ENCODE measurements at regions of chr10 and their contacts with region 1.

Region 1: GRCh38 chr10:60816628-60817397 is 38.5 kb downstream of the CDK1 start:
- DNase-seq: peak; percentile 26
- ATAC-seq: peak; percentile 85
- H3K4me3 ChIP-seq: no peak overlapping the region
- H3K27ac ChIP-seq: no peak overlapping the region
- H3K4me1 ChIP-seq: no peaks in the 10 kb centered on the region
- H3K27me3 ChIP-seq: no peaks in the 10 kb centered on the region
- CTCF ChIP-seq: peak; percentile 74 to 90 (median 80)
- EP300 ChIP-seq: no peak
- POLR2A ChIP-seq: no peak
- RAD21 ChIP-seq: peak; percentile 91

Region 2: DNA sequence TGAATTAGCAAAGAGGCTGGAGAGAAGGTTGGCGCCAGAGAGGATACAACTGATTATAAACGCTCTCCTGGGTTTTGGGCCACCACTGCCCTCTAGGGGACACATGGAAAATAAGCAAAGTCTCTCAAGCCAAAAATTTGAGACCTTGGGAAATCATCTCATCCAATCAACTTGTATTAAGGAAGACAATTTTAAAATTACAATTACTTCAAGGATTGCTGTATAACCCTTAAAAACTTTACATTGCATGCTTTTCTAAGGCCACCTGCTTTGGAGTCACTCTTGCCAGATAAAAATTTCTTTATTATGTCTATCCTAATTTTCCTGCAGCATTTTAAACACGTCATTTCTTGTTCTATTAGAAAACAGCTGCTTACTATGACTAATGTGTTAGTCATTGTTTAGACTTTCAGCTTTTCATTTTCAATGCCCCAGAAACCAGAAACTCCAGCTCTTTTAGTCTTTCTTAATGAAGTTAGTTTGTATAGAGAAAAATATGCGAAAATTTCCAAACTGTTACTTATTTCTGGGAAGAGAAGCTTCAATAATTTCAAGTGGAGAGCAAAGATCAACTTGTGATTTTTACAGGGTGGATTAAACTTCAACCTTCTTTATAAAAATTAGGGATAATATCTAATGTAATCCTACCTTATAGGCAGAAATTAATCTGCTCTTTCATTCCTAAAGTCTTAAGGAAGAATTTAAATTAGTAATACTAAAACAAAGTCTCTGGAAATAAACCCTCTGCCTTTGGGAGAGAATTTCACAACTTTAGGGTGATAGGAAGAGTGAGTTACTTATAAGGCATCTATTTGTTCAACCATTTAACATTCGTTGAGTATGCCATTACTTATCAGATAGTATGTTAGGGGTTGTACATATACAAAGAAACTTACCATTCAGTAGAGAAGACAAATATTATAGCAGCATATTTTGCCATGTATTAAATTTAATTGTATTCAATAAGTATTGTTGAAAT is 147.7 kb after region 1 on chr10:
- CTCF ChIA-PET with region 1: interaction called, 20 read pairs
- POLR2A ChIA-PET with region 1: no interaction called
- RAD21 ChIA-PET with region 1: interaction called, 6 read pairs
- SMC1A ChIA-PET with region 1: interaction called, 6 read pairs
- in situ Hi-C with region 1: loop called (anchors 5 kb)
- intact Hi-C with region 1: loop called (anchors 1 kb)
- DNase-seq: no peak
- ATAC-seq: peak; percentile 73
- H3K4me3 ChIP-seq: no peak overlapping the region
- H3K27ac ChIP-seq: no peak overlapping the region
- H3K4me1 ChIP-seq: no peaks in the 10 kb centered on the region
- H3K27me3 ChIP-seq: no peaks in the 10 kb centered on the region; a peak in 1 of 4 replicates
- CTCF ChIP-seq: peak; percentile 62 to 85 (median 73)
- EP300 ChIP-seq: no peak
- POLR2A ChIP-seq: no peak
- RAD21 ChIP-seq: peak; percentile 80

Region 3: DNA sequence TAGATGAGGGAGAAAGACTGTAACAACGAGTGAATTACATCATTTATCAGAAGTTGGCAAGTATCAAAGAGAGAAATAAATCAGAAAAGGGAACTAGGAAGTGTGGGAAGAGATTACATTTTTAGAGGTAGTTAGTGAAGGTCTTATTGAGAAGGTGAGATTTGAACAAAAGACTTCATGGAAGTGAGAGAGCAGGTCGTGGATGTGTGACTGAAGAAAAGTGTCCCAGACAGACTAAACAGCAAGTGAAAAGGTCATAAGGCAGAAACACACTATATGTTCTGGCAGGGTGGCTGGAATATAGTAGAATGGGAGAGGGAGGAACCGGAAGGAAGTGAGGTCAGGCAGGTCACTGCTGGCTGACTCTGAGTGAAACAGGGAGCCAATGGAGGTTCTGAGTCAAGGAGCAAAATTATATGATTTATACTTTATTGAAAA is 162.9 kb after region 1 on chr10:
- CTCF ChIA-PET with region 1: no interaction called
- POLR2A ChIA-PET with region 1: no interaction called
- RAD21 ChIA-PET with region 1: no interaction called
- SMC1A ChIA-PET with region 1: no interaction called
- in situ Hi-C with region 1: no loop called
- intact Hi-C with region 1: no loop called
- DNase-seq: no peak
- ATAC-seq: no peak
- H3K4me3 ChIP-seq: no peak overlapping the region
- H3K27ac ChIP-seq: no peak overlapping the region
- H3K4me1 ChIP-seq: no peaks in the 10 kb centered on the region
- H3K27me3 ChIP-seq: no peaks in the 10 kb centered on the region; a peak in 1 of 4 replicates
- CTCF ChIP-seq: no peak
- EP300 ChIP-seq: no peak
- POLR2A ChIP-seq: no peak
- RAD21 ChIP-seq: no peak

Region 4: DNA sequence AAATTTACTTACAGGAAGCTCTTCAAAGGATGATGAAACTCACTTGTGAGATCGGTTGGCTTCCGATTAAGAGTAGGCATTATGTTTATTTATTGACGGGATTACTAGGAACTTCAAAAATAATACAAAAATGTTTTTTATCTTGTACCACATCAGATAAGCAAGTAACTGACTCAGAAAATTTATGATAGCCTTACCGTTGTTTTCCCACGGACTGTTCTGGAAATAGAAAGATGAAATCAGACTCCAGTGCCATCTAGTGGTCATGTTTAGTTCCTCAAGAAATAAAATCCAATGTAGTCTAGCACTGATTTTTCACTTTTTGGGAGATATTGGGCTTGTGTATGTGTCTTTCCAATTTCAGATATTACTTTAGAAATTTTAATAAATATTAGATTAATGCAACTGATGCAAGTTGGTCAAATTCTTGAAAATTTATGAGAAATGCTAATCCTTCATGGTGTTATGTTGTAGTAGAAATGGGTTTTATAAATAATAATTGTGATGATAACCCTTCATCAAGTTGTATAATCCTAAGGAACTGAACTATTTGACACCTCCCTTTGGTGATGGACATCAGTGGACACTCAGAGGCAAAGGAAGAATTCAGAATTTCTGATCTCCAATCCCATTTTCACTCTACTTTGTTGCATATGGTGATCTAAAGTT is 467.5 kb after region 1 on chr10:
- CTCF ChIA-PET with region 1: interaction called, 8 read pairs
- POLR2A ChIA-PET with region 1: no interaction called
- RAD21 ChIA-PET with region 1: no interaction called
- SMC1A ChIA-PET with region 1: interaction called, 4 read pairs
- in situ Hi-C with region 1: loop called (anchors 10 kb)
- intact Hi-C with region 1: loop called (anchors 2 kb)
- DNase-seq: no peak
- ATAC-seq: no peak
- H3K4me3 ChIP-seq: no peak overlapping the region
- H3K27ac ChIP-seq: no peak overlapping the region
- H3K4me1 ChIP-seq: peaks cover 14% of the 10 kb centered on the region; the same call in 1 of the 2 replicates
- H3K27me3 ChIP-seq: no peaks in the 10 kb centered on the region
- CTCF ChIP-seq: peak; percentile 53 to 62 (median 60); a peak in 5 of 6 replicates
- EP300 ChIP-seq: no peak
- POLR2A ChIP-seq: no peak
- RAD21 ChIP-seq: peak; percentile 59

Region 5: GRCh38 chr10:61721431-61721830 is 904.6 kb after region 1 on chr10:
- CTCF ChIA-PET with region 1: no interaction called
- POLR2A ChIA-PET with region 1: no interaction called
- RAD21 ChIA-PET with region 1: no interaction called
- SMC1A ChIA-PET with region 1: no interaction called
- in situ Hi-C with region 1: loop called (anchors 10 kb)
- intact Hi-C with region 1: no loop called
- DNase-seq: no peak
- ATAC-seq: no peak
- H3K4me3 ChIP-seq: no peak overlapping the region
- H3K27ac ChIP-seq: no peak overlapping the region
- H3K4me1 ChIP-seq: no peaks in the 10 kb centered on the region
- H3K27me3 ChIP-seq: no peaks in the 10 kb centered on the region
- CTCF ChIP-seq: no peak
- EP300 ChIP-seq: no peak
- POLR2A ChIP-seq: no peak
- RAD21 ChIP-seq: no peak

Region 6: DNA sequence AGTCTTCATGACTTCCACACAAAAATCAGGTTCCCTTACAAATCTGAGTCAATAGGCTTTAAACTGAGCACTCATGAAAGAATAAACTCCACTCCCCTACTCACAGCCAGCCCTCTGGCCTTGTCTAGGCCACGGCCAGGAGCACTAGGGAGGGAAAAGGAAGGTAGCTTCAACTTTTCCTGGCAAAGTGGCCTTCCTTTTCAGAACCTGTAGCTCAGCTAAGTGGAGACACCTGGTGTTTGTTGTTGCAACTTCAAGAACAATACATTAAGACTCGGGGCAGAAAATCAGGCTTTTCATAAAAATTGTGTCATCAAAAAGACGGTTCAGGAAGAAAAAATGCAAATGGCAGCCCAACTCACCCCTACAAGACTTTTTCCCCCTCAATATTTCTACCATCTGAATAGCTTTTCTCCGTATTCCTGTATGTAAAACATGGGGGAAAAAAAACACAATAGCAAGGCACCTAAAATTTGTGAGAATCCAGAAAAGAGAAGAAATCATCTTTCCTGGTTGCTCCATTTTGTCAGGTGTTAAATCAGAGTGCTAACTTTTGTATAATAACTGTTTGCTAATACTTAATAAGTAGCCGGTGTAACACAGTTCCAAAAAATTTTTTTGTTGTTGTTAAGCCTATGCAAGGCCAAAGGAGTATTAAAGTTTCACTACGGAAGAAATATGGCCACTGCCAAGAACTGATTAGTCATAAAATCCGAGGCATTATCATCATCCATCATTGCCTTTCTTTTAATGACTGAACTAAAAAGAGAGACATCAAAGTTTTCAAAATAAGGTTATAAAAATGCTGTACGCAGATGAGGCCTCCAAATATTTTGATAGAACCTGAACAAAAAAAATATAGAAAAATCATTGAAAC is 1018.5 kb after region 1 on chr10:
- CTCF ChIA-PET with region 1: interaction called, 8 read pairs
- POLR2A ChIA-PET with region 1: no interaction called
- RAD21 ChIA-PET with region 1: interaction called, 6 read pairs
- SMC1A ChIA-PET with region 1: interaction called, 5 read pairs
- in situ Hi-C with region 1: loop called (anchors 25 kb)
- intact Hi-C with region 1: loop called (anchors 10 kb)
- DNase-seq: peak; percentile 7
- ATAC-seq: peak; percentile 76
- H3K4me3 ChIP-seq: no peak overlapping the region
- H3K27ac ChIP-seq: no peak overlapping the region
- H3K4me1 ChIP-seq: no peaks in the 10 kb centered on the region
- H3K27me3 ChIP-seq: no peaks in the 10 kb centered on the region
- CTCF ChIP-seq: peak; percentile 49 to 55 (median 52); a peak in 5 of 6 replicates
- EP300 ChIP-seq: no peak
- POLR2A ChIP-seq: no peak
- RAD21 ChIP-seq: peak; percentile 73

Measured in GM12878 (cell line).